Left ventricle myocardium superior (tissue), 1 donor: ENCODE measurements at regions of chr5 and their contacts with region 1.

Region 1: GRCh38 chr5:56838409-56839039 is 23.2 kb downstream of the MAP3K1 start:
- DNase-seq: no peak
- ATAC-seq: peak; percentile 74

Region 2: GRCh38 chr5:56270568-56271392 is 567.7 kb before region 1 on chr5:
- intact Hi-C with region 1: loop called (anchors 5 kb)
- DNase-seq: peak; percentile 82
- ATAC-seq: peak; percentile 100

Region 3: DNA sequence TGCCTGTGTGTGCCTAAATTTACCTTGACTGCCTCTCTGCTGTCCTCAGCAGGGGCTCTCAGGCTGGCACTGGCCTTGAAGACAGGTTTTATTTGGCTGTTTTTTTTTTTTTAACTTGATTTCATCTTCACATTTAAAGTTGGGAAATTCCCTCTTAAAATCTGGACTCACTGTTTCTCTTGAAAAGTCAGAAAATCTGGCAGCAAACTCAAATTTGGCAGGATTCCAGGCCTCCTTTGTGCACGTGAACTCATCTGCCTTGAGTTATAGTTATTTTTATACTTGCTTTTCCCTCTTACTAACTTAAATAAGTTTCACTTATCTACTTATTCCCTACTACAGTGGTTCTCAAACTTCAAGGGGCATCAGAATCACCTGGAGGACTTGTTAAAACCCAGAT is 141.6 kb before region 1 on chr5:
- intact Hi-C with region 1: no loop called
- DNase-seq: no peak
- ATAC-seq: no peak

Region 4: DNA sequence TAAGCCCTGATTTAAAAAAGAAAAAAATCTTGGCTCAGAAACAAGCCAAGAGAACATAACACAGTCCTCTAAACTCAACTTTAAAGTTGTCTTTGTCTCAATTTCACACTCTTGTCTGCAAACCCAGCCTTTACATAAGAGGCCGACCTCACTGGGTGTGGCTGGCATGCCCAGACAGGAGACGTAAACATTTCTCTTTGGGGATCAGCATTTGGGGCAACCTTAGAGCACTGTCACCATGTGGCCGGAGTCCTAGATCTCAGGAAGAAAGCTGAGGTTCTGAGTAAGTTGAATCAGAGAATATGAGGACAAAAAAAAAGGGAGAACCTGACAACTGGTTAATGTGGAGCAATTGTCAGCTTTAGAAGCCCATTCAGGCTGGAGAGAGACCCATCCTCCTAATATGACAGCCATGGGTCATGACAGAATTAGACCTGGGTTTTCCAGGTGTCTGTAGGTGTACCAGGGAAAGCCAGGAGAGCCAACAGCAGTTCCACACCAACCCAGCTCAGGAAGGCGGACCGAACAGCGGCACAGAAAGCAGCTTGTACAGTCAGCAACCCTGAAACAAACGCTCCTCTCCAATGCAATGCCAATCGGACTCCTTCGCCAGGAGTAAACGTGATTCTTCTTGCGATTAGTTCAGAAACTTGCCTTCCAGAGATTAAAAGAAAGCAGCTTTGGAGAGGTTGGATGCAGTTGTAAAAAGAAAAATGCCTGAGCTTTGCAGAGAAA is 121.1 kb before region 1 on chr5:
- intact Hi-C with region 1: no loop called
- DNase-seq: no peak
- ATAC-seq: no peak